ENCODE measurements at regions of chr1 and their contacts with region 1.

Region 1: DNA sequence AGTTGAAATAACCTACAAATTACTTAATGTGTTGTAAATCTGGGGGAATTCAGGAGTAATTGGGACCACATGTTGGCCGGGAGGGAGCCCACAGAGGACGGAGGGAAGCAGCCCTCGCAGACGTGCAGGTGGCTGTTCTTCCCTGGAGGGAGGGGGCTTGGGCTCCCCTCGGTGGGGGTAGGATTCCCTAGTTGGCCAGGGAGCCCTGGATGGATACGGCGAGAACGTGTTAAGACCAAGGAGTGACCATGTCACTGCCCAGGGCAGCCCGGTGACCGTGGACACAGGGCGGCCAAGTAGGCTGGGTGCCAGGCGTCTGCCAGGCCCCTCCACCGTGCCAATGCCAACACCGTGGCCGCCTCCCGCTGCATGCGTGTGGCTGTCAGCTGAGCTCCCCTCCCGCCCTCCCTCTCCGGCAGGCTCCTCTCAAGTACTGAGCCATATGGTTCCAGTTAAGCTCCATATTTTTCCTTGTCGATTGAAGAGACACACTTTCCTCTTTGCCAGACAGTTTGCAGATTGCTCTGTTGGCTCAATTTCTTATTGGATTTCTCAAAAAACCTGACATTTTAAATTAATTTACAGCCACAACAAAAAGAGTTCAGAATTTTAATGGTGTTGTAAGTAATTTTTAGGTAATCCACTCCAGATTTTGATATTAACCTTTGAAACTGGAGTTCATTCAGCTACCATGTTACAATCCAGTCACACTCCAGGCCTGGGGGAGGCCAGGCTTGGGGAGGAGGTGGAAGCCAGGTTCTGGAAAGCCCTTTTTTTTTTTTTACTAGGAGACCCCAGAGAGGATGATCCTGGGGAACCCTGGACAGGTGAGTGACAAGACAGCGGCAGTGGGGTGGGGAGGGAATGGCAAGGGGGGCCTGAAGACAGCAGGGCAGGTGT is 71.2 kb downstream of the CASZ1 start:
- DNase-seq: peak in 4 of 5 donors; percentile 71 to 84 (median 80)
- ATAC-seq: peak; percentile 13 to 54 (median 46)
- H3K4me3 ChIP-seq: no peak overlapping the region
- H3K27ac ChIP-seq: peak overlapping the region; percentile 79 to 100 (median 88)
- H3K4me1 ChIP-seq: peaks cover 0 to 87% (median 45%) of the 10 kb centered on the region in 12 donors
- H3K27me3 ChIP-seq: no peaks in the 10 kb centered on the region
- CTCF ChIP-seq: no peak
- POLR2A ChIP-seq: no peak

Region 2: DNA sequence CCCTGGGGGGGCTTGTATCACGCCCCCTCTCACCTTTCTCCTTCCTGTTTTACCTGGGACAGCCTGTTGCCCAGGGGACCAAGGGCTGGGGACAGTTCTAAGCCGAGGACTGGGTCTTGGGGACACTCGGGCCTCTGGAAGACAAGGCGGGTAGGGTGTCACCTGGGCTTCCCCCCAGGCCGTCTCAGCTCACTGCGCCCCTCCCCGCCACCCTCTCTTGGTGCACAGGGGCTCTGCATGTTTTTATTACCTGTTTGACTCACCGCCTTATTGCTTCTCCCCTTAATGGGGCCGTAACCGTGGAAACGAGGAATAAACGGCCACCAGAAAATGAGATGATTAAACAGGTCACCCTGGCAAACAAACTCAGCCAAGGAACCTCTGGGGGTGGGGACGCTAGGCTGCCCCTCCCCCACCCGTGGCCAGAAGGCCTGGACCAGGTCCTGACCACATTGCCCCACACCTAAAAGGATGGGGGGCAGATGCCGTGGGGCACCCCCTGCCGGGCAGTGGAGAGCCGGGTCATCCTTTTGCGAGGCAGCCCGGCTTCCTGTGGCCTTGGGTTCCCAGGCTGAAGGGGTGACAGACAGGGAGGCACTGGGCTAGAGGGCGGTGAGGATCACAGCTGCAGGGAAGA is 38.7 kb before region 1 on chr1:
- intact Hi-C with region 1: loop called in 1 of 10 experiments (anchors 5 kb)
- DNase-seq: no peak
- ATAC-seq: peak in 1 of 4 donors; percentile 7
- H3K4me3 ChIP-seq: no peak overlapping the region
- H3K27ac ChIP-seq: peak overlapping the region; percentile 66 to 94 (median 88)
- H3K4me1 ChIP-seq: peaks cover 38 to 99% (median 89%) of the 10 kb centered on the region in 12 donors
- H3K27me3 ChIP-seq: no peaks in the 10 kb centered on the region
- CTCF ChIP-seq: peak in 1 of 12 donors; percentile 13
- POLR2A ChIP-seq: no peak

Region 3: GRCh38 chr1:10736634-10737586 is 11.7 kb after region 1 on chr1:
- intact Hi-C with region 1: no loop called
- DNase-seq: peak in 4 of 5 donors; percentile 60 to 82 (median 76)
- ATAC-seq: peak; percentile 61 to 78 (median 70)
- H3K4me3 ChIP-seq: no peak overlapping the region
- H3K27ac ChIP-seq: peak overlapping the region in 11 of 12 donors; percentile 15 to 87 (median 71)
- H3K4me1 ChIP-seq: peaks cover 0 to 80% (median 44%) of the 10 kb centered on the region in 12 donors
- H3K27me3 ChIP-seq: no peaks in the 10 kb centered on the region
- CTCF ChIP-seq: no peak
- POLR2A ChIP-seq: no peak

Measured in heart left ventricle (tissue), 16 donors.